ENCODE measurements at regions of chr14 and their contacts with region 1.

Region 1: DNA sequence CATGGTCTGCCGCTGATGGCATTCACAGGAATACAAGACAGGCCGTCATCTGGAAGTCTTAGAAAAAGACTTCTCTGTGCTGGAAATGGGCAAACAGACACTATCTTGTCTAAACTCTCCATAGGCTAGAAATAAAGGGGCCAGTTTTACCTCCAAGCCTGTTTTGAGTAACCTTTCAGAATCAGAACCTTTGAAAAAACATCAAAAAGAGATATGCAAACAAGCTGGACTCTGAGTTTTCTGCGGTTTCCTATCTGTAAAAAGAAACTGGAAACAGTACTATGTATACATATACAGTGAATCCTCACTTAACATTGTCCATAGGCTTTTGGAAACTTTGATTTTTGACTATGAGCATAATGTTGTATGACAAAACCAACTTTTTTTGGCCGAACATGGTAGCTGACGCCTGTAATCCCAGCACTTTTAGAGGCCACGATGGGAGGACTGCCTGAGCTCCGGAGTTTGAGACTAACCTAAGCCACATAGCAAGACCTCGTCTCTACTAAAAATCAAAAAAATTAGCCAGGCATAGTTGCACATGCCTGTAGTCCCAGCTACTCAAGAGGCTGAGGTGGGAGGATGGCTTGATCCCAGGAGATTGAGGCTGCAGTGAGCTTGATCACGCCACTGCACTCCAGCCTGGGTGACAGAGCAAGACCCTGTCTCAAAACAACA is 92.9 kb upstream of the MAX start:
- DNase-seq: peak; percentile 68
- ATAC-seq: peak; percentile 96
- H3K4me3 ChIP-seq: peak overlapping the region; percentile 37
- H3K27ac ChIP-seq: peak overlapping the region; percentile 75
- H3K4me1 ChIP-seq: peaks cover 21% of the 10 kb centered on the region
- H3K27me3 ChIP-seq: no peaks in the 10 kb centered on the region
- CTCF ChIP-seq: no peak
- EP300 ChIP-seq: peak in 1 of 2 experiments; percentile 70; a peak in 2 of 4 replicates
- POLR2A ChIP-seq: no peak
- RAD21 ChIP-seq: 0 out of 2 replicates have a peak, but pooled peaks have one; percentile 1

Region 2: DNA sequence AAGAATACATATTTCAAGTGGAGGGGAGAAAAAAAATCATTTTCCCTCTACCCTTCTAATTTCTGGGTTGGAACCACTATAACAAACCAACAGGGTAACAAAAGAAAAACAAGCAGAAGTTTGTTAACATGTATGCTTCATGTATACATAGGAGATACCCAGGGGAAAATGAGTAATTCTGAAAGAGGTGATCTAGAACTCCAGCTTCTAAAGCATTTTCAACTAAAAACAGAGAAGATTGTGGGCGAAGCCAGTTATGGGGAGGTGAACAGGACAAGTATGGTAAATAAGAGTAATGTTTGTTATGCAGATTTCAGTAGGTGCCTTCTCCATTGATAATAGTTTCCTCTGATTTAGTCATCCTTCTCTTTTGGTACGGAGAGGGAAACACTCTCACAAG is 191.8 kb before region 1 on chr14:
- CTCF ChIA-PET with region 1: no interaction called
- POLR2A ChIA-PET with region 1: no interaction called
- RAD21 ChIA-PET with region 1: no interaction called
- SMC1A ChIA-PET with region 1: no interaction called
- in situ Hi-C with region 1: no loop called
- intact Hi-C with region 1: no loop called
- DNase-seq: peak; percentile 55
- ATAC-seq: peak; percentile 85
- H3K4me3 ChIP-seq: 0 out of 2 replicates have a peak overlapping the region, but pooled peaks have one; percentile 19
- H3K27ac ChIP-seq: peak overlapping the region; percentile 59
- H3K4me1 ChIP-seq: peaks cover 28% of the 10 kb centered on the region
- H3K27me3 ChIP-seq: no peaks in the 10 kb centered on the region
- CTCF ChIP-seq: no peak
- EP300 ChIP-seq: 0 out of 4 replicates have a peak, but pooled peaks of 1 of the 2 experiments have one; percentile 30
- POLR2A ChIP-seq: no peak
- RAD21 ChIP-seq: 0 out of 2 replicates have a peak, but pooled peaks have one; percentile 8

Region 3: DNA sequence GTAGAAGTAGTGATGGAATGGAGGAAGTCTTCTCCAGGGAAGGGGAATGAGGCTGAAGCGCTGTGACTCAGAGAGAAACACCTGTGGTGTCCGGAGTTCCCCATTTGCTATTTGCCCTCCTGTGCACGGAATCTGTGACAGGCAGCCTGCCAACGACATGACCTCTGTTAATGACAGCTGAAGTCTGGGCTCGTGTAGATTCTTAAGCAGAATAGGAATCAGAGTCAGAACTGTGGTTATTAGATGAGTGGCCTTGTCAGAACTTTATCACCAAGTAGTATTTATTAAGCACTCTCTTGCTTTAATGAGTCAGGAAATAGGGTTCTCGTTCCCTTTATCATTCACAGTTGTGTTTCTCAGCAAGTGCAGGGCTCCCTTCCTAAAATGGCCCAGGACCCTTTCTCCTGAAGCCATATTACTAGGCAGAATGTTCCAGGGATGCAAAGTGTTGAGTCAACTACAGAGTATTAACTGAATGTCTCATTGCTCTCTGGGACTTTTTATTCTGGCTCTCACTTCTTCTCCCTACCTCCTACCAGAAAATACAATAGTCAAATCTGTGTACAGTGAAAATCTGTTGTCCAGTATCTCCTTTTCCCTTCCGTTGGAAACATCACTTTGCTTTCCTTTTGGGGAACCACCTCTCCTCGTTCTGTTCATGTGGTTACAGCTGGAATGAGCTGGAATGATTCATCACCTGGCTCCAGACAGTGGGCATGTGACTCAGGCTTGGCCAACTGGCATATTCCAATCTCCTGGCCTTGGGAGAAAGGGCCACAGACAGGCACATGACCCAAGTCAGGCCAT is 15.1 kb before region 1 on chr14:
- CTCF ChIA-PET with region 1: interaction called, 9 read pairs
- POLR2A ChIA-PET with region 1: interaction called, 3 read pairs
- RAD21 ChIA-PET with region 1: interaction called, 3 read pairs
- SMC1A ChIA-PET with region 1: interaction called, 8 read pairs
- in situ Hi-C with region 1: no loop called
- intact Hi-C with region 1: loop called (anchors 1 kb)
- DNase-seq: peak; percentile 94
- ATAC-seq: peak; percentile 94
- H3K4me3 ChIP-seq: peak overlapping the region; percentile 9; the same call in 1 of the 2 replicates
- H3K27ac ChIP-seq: peak overlapping the region; percentile 99
- H3K4me1 ChIP-seq: peaks cover 32% of the 10 kb centered on the region
- H3K27me3 ChIP-seq: no peaks in the 10 kb centered on the region
- CTCF ChIP-seq: no peak
- EP300 ChIP-seq: peak; percentile 86 to 87
- POLR2A ChIP-seq: no peak
- RAD21 ChIP-seq: peak; percentile 11; the same call in 1 of the 2 replicates

Measured in GM12878 (cell line).